ENCODE measurements at regions of chr15 and their contacts with region 1.

Region 1: GRCh38 chr15:86929461-86929860 is 849.8 kb downstream of the AGBL1 start:
- DNase-seq: no peak
- H3K4me3 ChIP-seq: no peak overlapping the region
- H3K27ac ChIP-seq: no peak overlapping the region
- H3K4me1 ChIP-seq: no peaks in the 10 kb centered on the region
- H3K27me3 ChIP-seq: no peaks in the 10 kb centered on the region
- CTCF ChIP-seq: no peak
- EP300 ChIP-seq: no peak
- POLR2A ChIP-seq: no peak

Region 2: DNA sequence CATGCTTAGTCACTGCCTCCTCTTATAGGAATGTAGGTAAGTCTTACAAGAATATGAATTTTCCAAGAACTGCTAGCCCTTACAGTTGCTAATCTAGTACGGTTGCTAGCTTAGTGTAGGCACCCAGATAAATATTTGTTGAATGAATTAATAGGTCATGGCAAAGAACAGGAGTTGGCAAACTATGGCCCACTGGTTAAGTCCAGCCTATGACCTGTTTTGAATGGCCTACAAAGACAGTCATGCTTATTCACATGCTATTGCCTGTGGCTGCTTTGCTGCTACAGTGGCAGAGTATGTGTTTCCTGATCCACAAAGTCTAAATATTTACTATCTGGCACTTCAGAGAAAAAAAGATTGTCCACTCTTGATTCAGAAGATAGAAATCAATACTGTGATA is 218.0 kb before region 1 on chr15:
- intact Hi-C with region 1: no loop called
- DNase-seq: no peak
- H3K4me3 ChIP-seq: no peak overlapping the region
- H3K27ac ChIP-seq: no peak overlapping the region
- H3K4me1 ChIP-seq: no peaks in the 10 kb centered on the region
- H3K27me3 ChIP-seq: no peaks in the 10 kb centered on the region
- CTCF ChIP-seq: no peak
- EP300 ChIP-seq: no peak
- POLR2A ChIP-seq: no peak

Region 3: GRCh38 chr15:86863226-86863915 is 66.1 kb before region 1 on chr15:
- intact Hi-C with region 1: loop called in 1 of 4 experiments (anchors 10 kb)
- DNase-seq: no peak
- H3K4me3 ChIP-seq: no peak overlapping the region
- H3K27ac ChIP-seq: no peak overlapping the region
- H3K4me1 ChIP-seq: no peaks in the 10 kb centered on the region
- H3K27me3 ChIP-seq: no peaks in the 10 kb centered on the region
- CTCF ChIP-seq: no peak
- EP300 ChIP-seq: no peak
- POLR2A ChIP-seq: no peak

Region 4: GRCh38 chr15:86885616-86886015 is 43.8 kb before region 1 on chr15:
- intact Hi-C with region 1: no loop called
- DNase-seq: no peak
- H3K4me3 ChIP-seq: no peak overlapping the region
- H3K27ac ChIP-seq: no peak overlapping the region
- H3K4me1 ChIP-seq: no peaks in the 10 kb centered on the region
- H3K27me3 ChIP-seq: no peaks in the 10 kb centered on the region
- CTCF ChIP-seq: no peak
- EP300 ChIP-seq: no peak
- POLR2A ChIP-seq: no peak

Measured in ovary (tissue), 10 donors.